ENCODE measurements at regions of chr3 and their contacts with region 1.

Region 1: DNA sequence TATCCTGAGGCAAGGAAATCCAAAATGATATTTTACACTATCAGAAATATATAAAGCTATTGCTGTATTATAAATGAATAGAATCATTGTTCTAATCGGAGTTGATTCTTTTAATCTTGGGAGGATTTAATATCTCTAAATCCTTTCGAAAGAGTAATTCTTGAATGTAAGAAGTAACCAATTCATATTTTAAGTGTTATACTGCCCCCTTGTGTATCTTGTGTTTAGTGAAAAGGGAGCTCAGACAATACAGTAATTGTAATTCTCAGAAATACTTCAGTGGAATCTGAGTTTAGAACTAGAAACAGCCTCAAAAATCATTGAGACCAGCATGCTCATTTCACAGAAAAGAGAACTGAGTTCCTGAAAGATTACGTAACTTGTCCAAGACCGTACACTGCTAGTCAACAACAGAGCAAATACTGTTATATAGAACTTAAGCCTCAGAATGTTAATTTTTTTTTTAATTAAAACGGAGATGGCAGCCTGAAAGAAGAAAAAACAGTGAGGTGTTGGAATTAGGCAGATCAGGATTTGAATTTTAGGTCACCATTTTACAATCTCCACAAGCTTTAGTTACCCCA is 42.9 kb downstream of the PLCH1 start:
- DNase-seq: peak; percentile 48
- H3K4me3 ChIP-seq: no peak overlapping the region
- H3K27ac ChIP-seq: no peak overlapping the region
- H3K4me1 ChIP-seq: no peaks in the 10 kb centered on the region
- H3K27me3 ChIP-seq: peaks cover 4 to 10% of the 10 kb centered on the region in 2 experiments
- CTCF ChIP-seq: peak; percentile 26 to 30
- POLR2A ChIP-seq: no peak

Region 2: GRCh38 chr3:154758109-154758868 is 943.7 kb before region 1 on chr3:
- CTCF ChIA-PET with region 1: interaction called, 7 read pairs
- POLR2A ChIA-PET with region 1: no interaction called
- dilution Hi-C with region 1: no loop called
- intact Hi-C with region 1: loop called (anchors 10 kb)
- DNase-seq: peak; percentile 11
- H3K4me3 ChIP-seq: no peak overlapping the region
- H3K27ac ChIP-seq: no peak overlapping the region
- H3K4me1 ChIP-seq: no peaks in the 10 kb centered on the region
- H3K27me3 ChIP-seq: no peaks in the 10 kb centered on the region
- CTCF ChIP-seq: no peak
- POLR2A ChIP-seq: no peak

Region 3: DNA sequence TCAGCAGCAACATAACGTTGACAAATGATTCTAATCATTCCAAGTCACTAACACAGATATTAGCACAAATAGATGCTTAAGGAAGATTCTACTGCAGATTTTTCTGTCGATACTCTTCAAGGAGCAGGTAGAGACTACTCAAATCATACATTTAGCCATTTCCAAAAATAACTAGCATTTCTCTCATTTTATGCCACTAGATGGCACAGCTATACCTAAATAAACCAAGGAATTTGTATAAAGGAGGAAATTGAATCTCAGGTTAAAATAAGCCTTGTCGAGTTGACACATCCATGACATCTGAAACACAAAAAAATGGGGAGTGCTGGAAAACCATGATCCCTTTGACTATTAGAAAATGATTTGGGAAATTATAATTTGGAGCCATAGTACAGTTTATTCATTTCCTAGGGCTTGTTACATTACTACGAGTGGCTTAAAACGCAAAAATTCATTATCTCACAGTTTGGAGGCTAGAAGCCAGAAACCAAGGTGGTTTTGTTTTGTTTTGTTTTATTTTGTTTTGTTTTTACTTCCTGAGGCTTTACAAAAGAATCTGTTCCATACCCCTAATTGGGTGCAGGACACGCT is 349.0 kb before region 1 on chr3:
- CTCF ChIA-PET with region 1: interaction called, 105 read pairs
- POLR2A ChIA-PET with region 1: no interaction called
- dilution Hi-C with region 1: no loop called
- intact Hi-C with region 1: loop called (anchors 1 kb)
- DNase-seq: peak; percentile 29
- H3K4me3 ChIP-seq: no peak overlapping the region
- H3K27ac ChIP-seq: no peak overlapping the region
- H3K4me1 ChIP-seq: no peaks in the 10 kb centered on the region
- H3K27me3 ChIP-seq: no peaks in the 10 kb centered on the region
- CTCF ChIP-seq: peak in 1 of 2 donors; percentile 24
- POLR2A ChIP-seq: no peak

Region 4: GRCh38 chr3:155398046-155398445 is 303.9 kb before region 1 on chr3:
- CTCF ChIA-PET with region 1: no interaction called
- POLR2A ChIA-PET with region 1: no interaction called
- dilution Hi-C with region 1: no loop called
- intact Hi-C with region 1: no loop called
- DNase-seq: no peak
- H3K4me3 ChIP-seq: no peak overlapping the region
- H3K27ac ChIP-seq: no peak overlapping the region
- H3K4me1 ChIP-seq: no peaks in the 10 kb centered on the region
- H3K27me3 ChIP-seq: no peaks in the 10 kb centered on the region
- CTCF ChIP-seq: no peak
- POLR2A ChIP-seq: no peak

Region 5: DNA sequence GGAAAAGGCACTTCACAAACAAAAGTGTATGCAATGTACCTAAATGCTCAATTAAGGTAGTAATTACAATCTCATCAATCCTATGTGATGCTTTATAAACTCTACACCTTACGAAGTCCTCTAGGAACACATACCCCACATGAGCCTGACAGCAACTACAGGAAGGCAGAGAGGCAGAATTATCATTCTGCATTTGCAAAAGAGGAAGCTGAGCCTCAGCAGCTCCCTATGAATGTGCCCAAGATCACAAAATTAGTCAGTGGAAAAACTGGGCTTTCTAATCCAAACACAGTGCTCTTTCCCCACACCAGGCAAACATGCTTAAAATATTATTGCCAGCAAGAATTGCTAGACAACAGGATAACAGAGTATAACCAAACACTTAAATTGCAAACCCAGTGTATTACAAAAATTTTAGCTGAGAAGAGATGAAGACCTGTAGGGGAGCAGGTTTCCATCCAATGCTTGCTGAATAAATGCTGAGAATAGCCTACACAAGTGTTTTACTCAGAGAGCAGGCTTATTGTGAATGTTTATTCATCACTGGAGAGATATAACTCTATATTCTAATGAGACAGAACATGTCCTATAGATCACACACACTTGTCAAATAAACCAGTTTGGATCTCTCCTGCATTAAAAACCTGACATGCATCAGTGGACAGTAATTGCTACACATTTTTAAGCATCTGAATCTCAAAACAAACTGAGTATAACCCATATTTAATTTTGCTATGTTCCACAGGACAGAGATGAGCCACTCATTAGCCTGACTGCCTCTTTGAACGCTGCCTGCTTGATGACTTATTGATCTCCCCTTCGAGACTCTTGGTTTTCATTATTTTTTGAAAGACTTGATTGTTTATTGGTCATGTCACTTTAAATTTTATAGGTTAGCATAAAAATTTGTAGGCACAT is 19.3 kb before region 1 on chr3:
- CTCF ChIA-PET with region 1: interaction called, 12 read pairs
- POLR2A ChIA-PET with region 1: no interaction called
- dilution Hi-C with region 1: no loop called
- intact Hi-C with region 1: no loop called
- DNase-seq: no peak
- H3K4me3 ChIP-seq: no peak overlapping the region
- H3K27ac ChIP-seq: no peak overlapping the region
- H3K4me1 ChIP-seq: no peaks in the 10 kb centered on the region
- H3K27me3 ChIP-seq: no peaks in the 10 kb centered on the region
- CTCF ChIP-seq: no peak
- POLR2A ChIP-seq: no peak

Region 6: GRCh38 chr3:155854141-155854940 is 152.4 kb after region 1 on chr3 and contains the start of gene SLC33A1:
- CTCF ChIA-PET with region 1: no interaction called
- POLR2A ChIA-PET with region 1: no interaction called
- dilution Hi-C with region 1: no loop called
- intact Hi-C with region 1: no loop called
- DNase-seq: peak; percentile 100
- H3K4me3 ChIP-seq: peak within 1 kb of the TSS; percentile 56 to 96 (median 75)
- H3K27ac ChIP-seq: peak within 1 kb of the TSS; percentile 56
- H3K4me1 ChIP-seq: peaks cover 7% of the 10 kb centered on the region
- H3K27me3 ChIP-seq: no peaks in the 10 kb centered on the region
- CTCF ChIP-seq: no peak
- POLR2A ChIP-seq: peak; percentile 79
- total RNA-seq, gene SLC33A1: 30.1 and 30.3 TPM in 2 replicates

Region 7: GRCh38 chr3:156037356-156037755 is 335.4 kb after region 1 on chr3:
- CTCF ChIA-PET with region 1: no interaction called
- POLR2A ChIA-PET with region 1: no interaction called
- dilution Hi-C with region 1: no loop called
- intact Hi-C with region 1: loop called (anchors 5 kb)
- DNase-seq: no peak
- H3K4me3 ChIP-seq: no peak overlapping the region
- H3K27ac ChIP-seq: no peak overlapping the region
- H3K4me1 ChIP-seq: no peaks in the 10 kb centered on the region
- H3K27me3 ChIP-seq: peaks cover 0 to 2% of the 10 kb centered on the region in 2 experiments
- CTCF ChIP-seq: no peak
- POLR2A ChIP-seq: no peak